ENCODE measurements at regions of chr17 and their contacts with region 1.

Region 1: GRCh38 chr17:16363749-16364536 is 10.7 kb upstream of the CENPV start:
- DNase-seq: peak in 1 of 2 experiments; percentile 88
- H3K4me3 ChIP-seq: no peak overlapping the region
- H3K27ac ChIP-seq: no peak overlapping the region
- H3K4me1 ChIP-seq: peaks cover 0 to 2% (median 0%) of the 10 kb centered on the region in 4 experiments; a peak in 1 of 7 replicates
- H3K27me3 ChIP-seq: no peaks in the 10 kb centered on the region
- CTCF ChIP-seq: peak; percentile 62 to 93 (median 91)
- EP300 ChIP-seq: no peak
- POLR2A ChIP-seq: no peak
- RAD21 ChIP-seq: peak; percentile 86 to 88

Region 2: DNA sequence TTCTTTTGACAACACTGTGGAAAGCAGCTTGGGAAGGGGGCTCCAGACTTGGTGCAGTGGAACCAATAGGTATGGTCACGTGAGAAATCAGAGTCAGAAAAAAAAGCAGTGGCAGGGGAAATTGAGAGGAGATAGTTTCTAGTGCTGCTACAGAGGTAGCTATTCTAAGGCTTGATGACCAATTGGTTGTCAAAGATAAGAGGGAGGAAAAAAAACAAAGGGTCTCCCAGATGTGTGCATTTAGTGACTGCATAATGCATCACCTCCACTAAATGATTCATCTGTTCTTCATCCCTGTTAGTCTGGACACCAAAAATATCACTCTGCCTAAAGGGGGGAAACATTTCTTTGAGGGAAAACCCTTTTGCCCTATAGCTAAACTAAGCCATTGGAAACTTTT is 90.4 kb before region 1 on chr17:
- CTCF ChIA-PET with region 1: no interaction called
- POLR2A ChIA-PET with region 1: no interaction called
- DNase-seq: no peak
- H3K4me3 ChIP-seq: no peak overlapping the region
- H3K27ac ChIP-seq: no peak overlapping the region
- H3K4me1 ChIP-seq: no peaks in the 10 kb centered on the region
- H3K27me3 ChIP-seq: no peaks in the 10 kb centered on the region
- CTCF ChIP-seq: no peak
- EP300 ChIP-seq: no peak
- POLR2A ChIP-seq: no peak
- RAD21 ChIP-seq: no peak

Region 3: DNA sequence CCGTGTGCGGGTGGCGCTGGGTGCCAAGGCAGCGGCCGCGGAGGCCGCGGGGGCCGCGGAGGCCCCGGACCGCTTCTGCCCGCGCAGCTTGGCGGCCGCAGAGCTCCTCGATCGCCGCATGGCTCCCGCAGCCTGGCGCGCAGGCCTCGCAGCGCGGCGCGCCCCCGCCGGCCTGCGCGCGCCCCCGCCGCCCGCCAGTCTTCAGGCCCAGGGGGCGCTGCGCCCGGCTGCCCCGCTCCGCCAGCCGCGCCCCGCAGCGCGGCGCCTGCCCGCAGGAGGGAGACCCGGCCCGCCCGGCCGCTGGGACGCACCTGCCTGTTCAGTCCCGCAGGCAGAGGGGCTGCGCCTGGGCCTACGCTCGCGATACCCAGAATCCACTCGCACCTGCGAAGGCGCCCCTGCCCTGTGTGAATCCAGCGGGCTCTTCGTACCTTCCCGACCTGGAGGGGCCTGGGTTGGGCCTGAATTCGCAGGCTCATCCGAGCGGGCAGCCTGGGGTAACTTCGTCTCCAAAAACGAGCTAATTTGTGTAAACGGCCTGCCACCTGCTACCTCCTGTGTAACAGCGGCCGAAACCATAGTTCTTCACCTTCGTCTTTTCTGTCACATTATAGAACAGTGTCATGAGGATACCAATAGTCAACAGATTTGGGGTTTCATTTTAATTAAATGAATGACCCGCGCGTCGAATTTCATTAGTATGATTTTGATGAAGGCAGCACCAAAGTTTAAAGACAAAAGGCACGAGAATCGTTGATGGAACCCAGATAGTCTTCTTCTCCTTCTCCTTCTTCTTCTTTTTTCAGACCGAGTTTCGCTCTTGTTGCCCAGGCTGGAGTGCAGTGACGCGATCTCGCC is 10.4 kb before region 1 on chr17 and contains the start of gene CENPV:
- CTCF ChIA-PET with region 1: interaction called, 44 read pairs
- POLR2A ChIA-PET with region 1: interaction called, 5 read pairs
- DNase-seq: peak; percentile 54 to 88
- H3K4me3 ChIP-seq: peak within 1 kb of the TSS; percentile 78 to 95 (median 86)
- H3K27ac ChIP-seq: peak within 1 kb of the TSS; percentile 55
- H3K4me1 ChIP-seq: 0 out of 7 replicates have a peak, but pooled peaks cover 0 to 2% (median 0%) of the 10 kb centered on the region in 4 experiments
- H3K27me3 ChIP-seq: no peaks in the 10 kb centered on the region; a peak in 1 of 7 replicates
- CTCF ChIP-seq: peak; percentile 13 to 32 (median 14); a peak in 3 of 4 replicates
- EP300 ChIP-seq: no peak
- POLR2A ChIP-seq: peak; percentile 54 to 56; a peak in 2 of 3 replicates
- RAD21 ChIP-seq: no peak
- total RNA-seq, gene CENPV: 249 and 255 TPM in 2 replicates

Region 4: DNA sequence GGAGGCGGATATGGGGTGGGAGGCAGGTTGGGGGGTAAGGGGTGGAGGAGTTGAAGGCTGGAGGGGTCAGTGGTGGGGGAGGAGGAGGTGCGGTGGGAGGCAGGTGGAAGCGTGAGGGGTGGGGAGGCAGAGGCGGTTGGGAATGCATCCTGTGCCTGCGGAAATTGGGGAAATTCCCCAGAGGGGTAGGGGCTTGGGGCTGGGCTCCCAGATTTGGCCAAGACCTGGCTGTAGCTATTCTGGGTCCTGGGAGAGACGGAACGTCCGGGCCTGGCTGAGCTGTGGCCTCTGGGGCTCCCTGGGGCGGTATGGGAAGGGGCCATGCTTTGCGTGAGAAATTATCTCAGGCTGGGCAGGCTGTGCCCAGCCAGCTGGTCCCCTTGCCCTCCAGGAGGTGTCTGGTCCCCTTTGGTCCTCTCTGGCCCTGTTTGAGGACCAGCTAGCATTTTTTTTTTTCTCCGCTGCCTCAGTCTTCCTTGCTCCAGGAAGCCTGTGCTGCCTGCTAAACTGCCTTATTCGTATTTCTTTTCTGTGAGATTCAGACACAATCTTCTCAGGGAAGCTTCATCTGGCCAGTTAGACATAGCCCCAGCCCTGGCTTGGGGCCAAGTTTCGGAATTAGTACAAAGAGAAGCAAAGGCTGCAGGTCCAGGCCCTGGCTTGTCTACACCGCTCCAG is 44.1 kb after region 1 on chr17:
- CTCF ChIA-PET with region 1: interaction called, 10 read pairs
- POLR2A ChIA-PET with region 1: no interaction called
- DNase-seq: peak in 1 of 2 experiments; percentile 69
- H3K4me3 ChIP-seq: peak overlapping the region in 2 of 4 experiments; percentile 23 to 52; a peak in 4 of 8 replicates
- H3K27ac ChIP-seq: peak overlapping the region; percentile 68
- H3K4me1 ChIP-seq: peaks cover 4 to 7% (median 4%) of the 10 kb centered on the region in 4 experiments; a peak in 4 of 7 replicates
- H3K27me3 ChIP-seq: no peaks in the 10 kb centered on the region
- CTCF ChIP-seq: no peak
- EP300 ChIP-seq: no peak
- POLR2A ChIP-seq: no peak
- RAD21 ChIP-seq: no peak

Region 5: DNA sequence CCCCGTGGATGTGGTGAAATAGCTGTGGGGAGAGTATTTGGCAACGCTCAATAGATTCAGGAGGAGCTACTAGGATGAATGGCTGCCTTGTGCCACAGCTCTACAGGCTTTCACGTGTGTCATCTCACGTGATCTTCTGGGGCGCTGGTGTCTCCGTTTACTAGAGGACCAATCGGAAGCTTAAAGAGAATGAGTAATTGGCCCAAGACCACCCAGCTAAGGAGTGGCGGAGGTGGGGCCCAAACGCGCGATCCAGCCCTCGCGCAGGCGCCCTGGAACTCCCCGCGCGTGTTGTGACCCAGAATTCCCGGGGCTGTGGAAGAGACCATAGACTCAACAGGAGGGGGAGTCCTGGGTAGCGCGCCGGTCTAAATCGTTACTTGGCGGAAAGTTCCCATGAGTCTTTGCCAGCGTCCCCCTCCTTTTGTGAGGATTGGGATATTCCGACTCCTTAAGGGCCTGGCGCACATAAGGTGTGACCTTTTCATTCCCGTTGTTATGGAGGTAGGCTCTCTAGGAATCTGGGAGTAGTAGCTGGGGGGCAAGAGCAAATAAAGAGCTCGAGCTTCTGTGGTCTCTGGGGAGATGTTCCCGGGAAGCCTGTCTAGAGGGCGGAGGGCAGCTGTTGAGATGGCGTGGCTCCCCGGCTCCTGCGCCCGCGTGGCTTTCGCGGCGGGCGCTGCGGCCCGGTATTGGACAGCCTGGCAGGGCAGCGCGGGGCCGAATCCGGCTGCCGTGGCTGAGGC is 74.8 kb after region 1 on chr17:
- CTCF ChIA-PET with region 1: interaction called, 10 read pairs
- POLR2A ChIA-PET with region 1: interaction called, 14 read pairs
- DNase-seq: peak; percentile 91 to 99
- H3K4me3 ChIP-seq: peak overlapping the region; percentile 93 to 98 (median 96)
- H3K27ac ChIP-seq: peak overlapping the region; percentile 93
- H3K4me1 ChIP-seq: peaks cover 4 to 23% (median 13%) of the 10 kb centered on the region in 4 experiments
- H3K27me3 ChIP-seq: no peaks in the 10 kb centered on the region
- CTCF ChIP-seq: no peak
- EP300 ChIP-seq: peak in 1 of 2 experiments; percentile 99; a peak in 2 of 3 replicates
- POLR2A ChIP-seq: peak; percentile 94 to 99
- RAD21 ChIP-seq: peak in 1 of 2 experiments; percentile 8; a peak in 1 of 4 replicates

Region 6: GRCh38 chr17:16456742-16457316 is 92.9 kb after region 1 on chr17:
- CTCF ChIA-PET with region 1: interaction called, 25 read pairs
- POLR2A ChIA-PET with region 1: no interaction called
- DNase-seq: no peak
- H3K4me3 ChIP-seq: no peak overlapping the region
- H3K27ac ChIP-seq: no peak overlapping the region
- H3K4me1 ChIP-seq: peaks cover 6 to 16% (median 12%) of the 10 kb centered on the region in 4 experiments
- H3K27me3 ChIP-seq: no peaks in the 10 kb centered on the region
- CTCF ChIP-seq: peak; percentile 37 to 42 (median 37)
- EP300 ChIP-seq: no peak
- POLR2A ChIP-seq: no peak
- RAD21 ChIP-seq: peak; percentile 53 to 65

Measured in H1 (cell line).